AG04450 (cell line): ENCODE measurements at regions of chr16 and their contacts with region 1.

Region 1: DNA sequence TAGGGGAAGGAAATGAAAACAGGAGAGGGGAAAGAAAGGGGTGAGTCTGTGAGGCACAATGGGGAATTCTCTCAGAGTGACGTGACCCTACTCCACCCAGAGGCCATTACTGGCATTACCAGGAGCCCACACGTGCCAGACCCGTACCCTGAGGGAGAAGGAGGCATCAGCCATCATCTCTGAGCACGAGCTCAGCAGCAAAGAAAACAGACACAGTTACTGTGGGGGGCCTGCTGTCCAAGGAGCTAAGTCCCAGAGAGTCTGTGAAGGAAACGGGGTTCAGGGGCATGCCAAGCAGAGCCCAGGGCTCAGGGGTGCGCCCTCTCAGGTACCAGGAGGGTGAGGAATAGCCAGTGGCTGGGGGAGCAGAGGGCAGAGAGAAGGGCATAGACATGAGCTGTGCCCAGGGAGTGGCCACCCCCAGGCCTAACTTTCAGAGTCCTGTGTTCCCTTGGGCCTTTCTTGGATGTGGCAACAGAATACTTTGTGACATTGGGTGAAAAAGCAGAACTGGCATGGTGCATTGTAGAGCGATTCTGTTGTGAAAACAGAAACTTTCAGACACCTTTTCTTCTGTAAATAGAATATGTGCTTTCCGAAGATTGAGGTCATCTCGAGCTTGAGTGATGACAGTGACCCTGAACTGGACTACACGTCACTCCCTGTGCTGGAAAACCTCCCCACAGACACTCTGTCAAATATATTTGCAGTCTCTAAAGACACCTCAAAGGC is 11.3 kb downstream of the TAF1C start:
- DNase-seq: peak; percentile 21
- H3K4me3 ChIP-seq: no peak overlapping the region
- H3K27ac ChIP-seq: no peak overlapping the region
- H3K27me3 ChIP-seq: peaks cover 7% of the 10 kb centered on the region
- CTCF ChIP-seq: peak; percentile 80

Region 2: DNA sequence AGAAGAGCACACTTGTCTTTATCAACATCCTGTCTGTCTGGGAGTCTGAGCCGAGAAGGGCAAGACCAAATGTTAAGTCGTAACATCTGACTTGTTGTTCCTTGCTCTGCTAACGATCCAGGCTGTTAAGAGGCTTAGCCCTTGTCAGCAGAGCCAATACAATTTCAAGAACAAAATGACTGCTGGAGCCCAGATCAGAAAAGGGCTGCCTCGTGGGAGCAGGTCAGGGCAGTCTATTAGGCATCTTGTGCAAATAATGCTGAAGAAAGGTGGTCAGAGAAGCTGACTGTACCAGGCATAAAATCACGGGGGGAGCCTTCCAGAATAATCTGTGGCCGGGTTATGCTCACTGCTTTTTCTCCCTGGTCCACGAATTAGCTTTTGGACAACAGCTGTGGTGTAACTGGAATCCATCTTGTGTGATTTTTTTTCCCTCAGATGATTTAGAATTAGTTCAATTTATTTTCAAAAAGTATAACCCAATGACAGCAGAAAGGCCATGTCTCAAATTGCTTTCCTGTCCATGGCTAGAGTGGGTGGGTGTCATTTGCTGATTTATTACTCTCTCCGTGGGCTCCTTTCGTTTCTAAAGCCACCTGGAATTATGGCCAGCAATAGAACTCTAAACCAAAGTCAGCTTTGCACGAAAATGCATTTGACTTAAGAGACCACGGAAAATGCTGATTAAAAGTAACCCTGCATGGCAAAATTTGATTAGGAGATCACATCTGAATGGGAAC is 588.9 kb before region 1 on chr16:
- CTCF ChIA-PET with region 1: no interaction called
- POLR2A ChIA-PET with region 1: no interaction called
- DNase-seq: no peak
- H3K4me3 ChIP-seq: no peak overlapping the region
- H3K27ac ChIP-seq: no peak overlapping the region
- H3K27me3 ChIP-seq: no peaks in the 10 kb centered on the region
- CTCF ChIP-seq: no peak

Region 3: GRCh38 chr16:84072014-84072413 is 103.5 kb before region 1 on chr16:
- CTCF ChIA-PET with region 1: interaction called, 23 read pairs
- POLR2A ChIA-PET with region 1: no interaction called
- DNase-seq: peak; percentile 11
- H3K4me3 ChIP-seq: no peak overlapping the region
- H3K27ac ChIP-seq: peak overlapping the region; percentile 31
- H3K27me3 ChIP-seq: no peaks in the 10 kb centered on the region
- CTCF ChIP-seq: no peak

Region 4: DNA sequence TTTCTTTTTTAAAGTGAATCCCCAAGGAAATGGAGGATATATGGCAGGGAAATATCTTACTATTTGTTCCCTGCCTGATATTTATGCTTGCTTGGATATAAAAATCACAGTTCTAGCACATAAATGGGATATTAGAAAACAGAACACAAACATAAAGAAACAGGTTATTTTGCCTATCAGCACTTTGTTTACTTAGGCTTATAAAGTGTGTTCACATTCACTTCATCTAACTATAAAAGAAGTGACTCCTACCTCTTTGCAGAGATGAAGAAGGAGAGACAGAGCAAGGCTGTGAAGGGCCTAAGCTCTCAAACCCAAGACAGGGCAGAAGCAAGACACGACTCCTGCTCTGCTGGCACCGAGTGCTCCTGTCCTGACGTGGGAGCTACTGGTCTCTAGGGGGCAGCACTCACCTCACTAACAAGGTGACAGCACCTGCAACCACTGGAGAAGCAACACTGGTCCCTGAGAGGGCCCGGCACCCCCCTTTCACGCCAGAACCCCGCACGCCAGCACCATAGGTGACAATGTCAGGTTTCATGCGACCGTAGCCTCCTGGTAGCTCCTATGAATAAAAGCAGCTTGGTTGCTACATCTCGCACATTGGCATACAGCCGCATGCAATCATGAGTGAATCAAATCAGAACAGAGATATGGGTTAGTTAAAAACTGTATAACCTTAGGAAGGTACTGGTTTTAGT is 90.8 kb before region 1 on chr16:
- CTCF ChIA-PET with region 1: interaction called, 32 read pairs
- POLR2A ChIA-PET with region 1: no interaction called
- DNase-seq: peak; percentile 10
- H3K4me3 ChIP-seq: no peak overlapping the region
- H3K27ac ChIP-seq: no peak overlapping the region
- H3K27me3 ChIP-seq: no peaks in the 10 kb centered on the region
- CTCF ChIP-seq: peak; percentile 84

Region 5: GRCh38 chr16:84098936-84099335 is 76.6 kb before region 1 on chr16:
- CTCF ChIA-PET with region 1: interaction called, 12 read pairs
- POLR2A ChIA-PET with region 1: no interaction called
- DNase-seq: no peak
- H3K4me3 ChIP-seq: no peak overlapping the region
- H3K27ac ChIP-seq: no peak overlapping the region
- H3K27me3 ChIP-seq: no peaks in the 10 kb centered on the region
- CTCF ChIP-seq: no peak

Region 6: GRCh38 chr16:84116720-84117493 is 58.6 kb before region 1 on chr16 and contains the start of gene MBTPS1:
- CTCF ChIA-PET with region 1: interaction called, 24 read pairs
- POLR2A ChIA-PET with region 1: interaction called, 8 read pairs
- DNase-seq: peak; percentile 96
- H3K4me3 ChIP-seq: peak within 1 kb of the TSS; percentile 95
- H3K27ac ChIP-seq: peak within 1 kb of the TSS; percentile 73
- H3K27me3 ChIP-seq: no peaks in the 10 kb centered on the region
- CTCF ChIP-seq: no peak
- polyA plus RNA-seq, gene MBTPS1: 92.1 and 116 TPM in 2 replicates

Region 7: GRCh38 chr16:84308120-84308519 is 132.6 kb after region 1 on chr16:
- CTCF ChIA-PET with region 1: interaction called, 11 read pairs
- POLR2A ChIA-PET with region 1: no interaction called
- DNase-seq: peak; percentile 11
- H3K4me3 ChIP-seq: no peak overlapping the region
- H3K27ac ChIP-seq: no peak overlapping the region
- H3K27me3 ChIP-seq: peaks cover 8% of the 10 kb centered on the region
- CTCF ChIP-seq: peak; percentile 62